Psoas muscle (tissue), 8 donors: ENCODE measurements at regions of chr16 and their contacts with region 1.

Region 1: DNA sequence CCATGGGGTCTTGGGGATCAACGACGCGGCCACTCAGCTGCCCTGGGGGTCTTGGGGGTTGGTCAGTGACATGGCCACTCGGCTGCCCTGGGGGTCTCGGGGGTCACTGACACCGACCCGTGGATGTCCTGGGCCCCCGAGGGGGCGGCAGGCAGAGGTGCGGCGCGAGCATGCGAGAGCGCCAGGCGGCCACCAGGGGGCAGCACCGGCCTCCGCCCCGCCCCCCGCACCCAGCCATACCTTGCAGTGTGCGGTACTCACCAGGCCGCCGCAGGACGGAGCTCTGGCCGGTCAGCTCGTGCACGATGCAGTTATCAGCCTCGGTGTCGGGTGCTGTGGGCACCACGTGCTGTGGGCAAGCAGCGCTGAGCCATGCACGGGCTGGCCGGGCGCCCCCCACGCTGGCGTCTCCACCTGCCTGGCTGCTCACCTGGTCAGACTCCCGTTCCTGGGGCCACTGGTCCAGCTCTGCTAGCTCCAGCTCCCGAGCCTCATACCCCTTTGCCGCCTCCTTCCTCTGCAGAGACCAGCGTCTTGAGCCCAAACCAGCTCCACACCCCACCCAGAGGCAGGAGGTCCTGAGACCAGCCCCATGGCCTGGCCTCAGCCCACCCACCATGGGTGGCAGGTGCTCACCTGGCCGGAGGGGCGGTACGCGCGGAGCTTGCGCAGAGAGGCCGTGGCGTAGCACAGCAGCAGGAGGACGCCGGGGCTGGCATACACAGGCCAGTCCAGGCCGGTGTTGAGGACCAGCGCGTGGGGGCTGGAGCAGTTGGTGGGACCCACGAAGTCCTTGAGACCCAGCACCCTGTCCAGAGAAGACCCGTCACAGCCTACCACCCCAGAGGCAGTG is 31.2 kb downstream of the CTU2 start:
- DNase-seq: peak; percentile 70 to 88
- ATAC-seq: peak; percentile 72 to 91 (median 82)
- H3K4me3 ChIP-seq: no peak overlapping the region
- H3K27ac ChIP-seq: no peak overlapping the region
- H3K4me1 ChIP-seq: no peaks in the 10 kb centered on the region
- H3K27me3 ChIP-seq: peaks cover 0 to under 1% (median 0%) of the 10 kb centered on the region in 3 donors
- CTCF ChIP-seq: peak; percentile 96

Region 2: DNA sequence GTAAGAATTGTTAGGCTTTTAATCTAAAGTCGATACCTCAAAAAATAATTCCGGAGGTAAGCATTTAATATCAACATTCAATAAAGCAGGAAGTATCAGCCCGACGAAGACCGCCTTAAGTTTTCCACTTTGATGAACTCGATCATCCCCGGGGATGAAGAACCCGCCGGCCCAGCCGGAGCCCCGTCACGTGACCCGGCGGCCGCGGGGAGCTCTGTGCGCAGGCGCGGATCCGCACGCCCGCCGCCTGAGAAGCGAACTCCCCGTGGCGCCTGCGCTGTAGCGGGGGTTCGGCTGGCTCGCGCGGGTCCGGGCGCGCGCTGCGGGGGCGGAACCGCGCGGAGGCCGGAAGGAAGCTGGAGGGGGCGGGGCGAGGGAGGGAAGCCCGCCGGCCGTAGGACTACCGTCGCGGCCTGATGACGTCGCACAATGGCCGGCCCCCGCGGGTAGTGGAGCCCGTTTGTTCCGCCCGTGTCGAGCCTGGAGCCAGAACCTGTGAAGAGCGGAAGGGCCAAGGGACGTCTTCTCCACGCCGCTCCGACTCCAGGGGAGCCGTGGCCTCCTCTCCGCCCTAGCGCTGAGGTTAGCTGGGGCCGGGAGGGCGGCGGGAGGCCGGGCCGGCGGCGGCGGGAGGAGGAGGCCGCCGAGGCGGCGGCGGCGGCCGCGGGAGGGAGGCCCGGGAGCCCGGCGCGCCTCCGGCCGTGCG is 167.4 kb before region 1 on chr16 and contains the start of gene ZC3H18:
- intact Hi-C with region 1: no loop called
- DNase-seq: peak; percentile 98 to 99
- ATAC-seq: peak; percentile 99 to 100 (median 99)
- H3K4me3 ChIP-seq: peak within 1 kb of the TSS; percentile 72
- H3K27ac ChIP-seq: peak within 1 kb of the TSS; percentile 85
- H3K4me1 ChIP-seq: peaks cover 17% of the 10 kb centered on the region
- H3K27me3 ChIP-seq: no peaks in the 10 kb centered on the region
- CTCF ChIP-seq: no peak
- total RNA-seq, gene ZC3H18: 24.8 to 30.5 (median 26.9) TPM

Region 3: DNA sequence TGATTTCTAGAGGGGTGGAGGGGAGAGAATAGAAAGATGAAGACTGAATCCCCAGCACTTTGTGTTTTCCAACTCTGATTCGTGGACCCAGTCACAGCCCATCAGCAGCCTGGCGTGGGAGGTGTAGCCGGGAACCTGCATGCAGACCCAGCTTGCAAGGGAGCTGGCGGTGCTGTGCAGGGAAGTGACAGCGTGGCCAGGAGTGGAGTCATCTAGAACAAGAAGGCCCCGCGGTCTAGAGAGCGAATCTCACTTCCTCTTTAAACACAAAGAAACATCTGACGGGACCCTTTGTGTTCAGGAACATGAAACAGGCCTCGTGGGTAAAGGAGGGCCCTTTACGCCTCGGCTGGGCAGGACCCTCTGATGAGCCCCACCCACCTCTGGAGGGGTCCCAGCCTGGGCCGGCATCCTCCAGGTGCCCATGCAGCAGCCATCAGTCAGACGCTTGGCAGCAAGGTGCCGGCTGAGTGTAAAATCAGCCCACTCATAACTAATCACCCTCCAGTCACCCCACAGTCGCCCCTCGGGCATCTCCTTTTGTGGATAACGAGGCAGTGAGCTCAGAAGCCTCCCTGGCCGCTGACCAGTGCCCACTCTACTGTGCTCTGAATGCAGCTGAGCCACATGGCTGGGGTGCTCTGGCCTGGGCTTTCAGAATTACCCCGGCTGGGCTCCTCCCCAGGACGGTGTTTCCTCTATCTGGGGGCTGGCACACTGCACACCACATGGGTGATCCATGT is 55.6 kb before region 1 on chr16:
- intact Hi-C with region 1: no loop called
- DNase-seq: peak in 1 of 2 donors; percentile 65
- ATAC-seq: no peak
- H3K4me3 ChIP-seq: no peak overlapping the region
- H3K27ac ChIP-seq: peak overlapping the region; percentile 27
- H3K4me1 ChIP-seq: peaks cover 35% of the 10 kb centered on the region
- H3K27me3 ChIP-seq: peaks cover 0 to 4% (median 0%) of the 10 kb centered on the region in 3 donors
- CTCF ChIP-seq: no peak

Region 4: GRCh38 chr16:88785106-88785924 is 47.8 kb after region 1 on chr16 and contains the start of gene PIEZO1:
- intact Hi-C with region 1: loop called (anchors 2 to 5 kb)
- DNase-seq: peak; percentile 81 to 83
- ATAC-seq: peak; percentile 55 to 67 (median 57)
- H3K4me3 ChIP-seq: peak within 1 kb of the TSS; percentile 74
- H3K27ac ChIP-seq: peak within 1 kb of the TSS; percentile 61
- H3K4me1 ChIP-seq: peaks cover 7% of the 10 kb centered on the region
- H3K27me3 ChIP-seq: peaks cover 0 to 40% (median 12%) of the 10 kb centered on the region in 3 donors
- CTCF ChIP-seq: peak; percentile 64
- total RNA-seq, gene PIEZO1: 8.8 to 12.6 (median 10.9) TPM

Region 5: DNA sequence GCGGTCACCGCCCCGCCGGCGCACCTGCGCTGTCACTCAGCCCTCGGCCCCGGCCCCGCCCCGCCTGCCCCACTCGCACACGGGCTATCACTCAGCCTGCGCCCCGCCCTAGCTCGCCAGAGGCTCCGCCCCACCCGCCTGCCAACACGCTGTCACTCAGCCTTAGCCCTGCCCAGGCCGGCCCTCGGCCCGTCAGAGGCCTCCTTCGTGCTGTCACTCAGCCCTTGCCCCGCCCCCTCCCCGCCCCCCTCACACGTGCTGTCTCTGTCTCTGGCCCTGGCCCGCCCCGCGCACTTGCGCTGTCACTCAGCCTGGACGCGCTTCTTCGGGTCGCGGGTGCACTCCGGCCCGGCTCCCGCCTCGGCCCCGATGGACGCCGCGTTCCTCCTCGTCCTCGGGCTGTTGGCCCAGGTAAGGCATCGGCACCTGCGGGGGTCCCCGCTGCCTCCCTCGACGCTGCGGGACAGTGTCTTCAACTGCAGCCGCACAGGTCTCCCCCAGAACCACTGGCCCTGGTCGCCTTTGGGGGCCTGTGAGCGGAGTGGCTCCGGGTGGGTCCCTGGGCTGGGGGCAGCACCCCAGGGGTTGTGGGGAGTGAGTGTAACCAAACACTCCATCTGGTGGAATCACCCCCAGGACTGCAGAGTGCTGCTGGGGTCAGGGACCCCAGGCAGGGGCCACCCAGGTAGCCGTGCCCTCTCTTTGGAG is 434.1 kb after region 1 on chr16 and contains the start of gene CDH15:
- intact Hi-C with region 1: loop called (anchors 2 to 5 kb)
- DNase-seq: peak; percentile 94 to 99
- ATAC-seq: peak; percentile 86 to 91 (median 88)
- H3K4me3 ChIP-seq: peak within 1 kb of the TSS; percentile 87
- H3K27ac ChIP-seq: peak within 1 kb of the TSS; percentile 95
- H3K4me1 ChIP-seq: peaks cover 43% of the 10 kb centered on the region
- H3K27me3 ChIP-seq: peaks cover 0 to 16% (median 0%) of the 10 kb centered on the region in 3 donors
- CTCF ChIP-seq: no peak
- total RNA-seq, gene CDH15: 36.7 to 62.8 (median 51.1) TPM

Region 6: GRCh38 chr16:89210904-89211515 is 473.5 kb after region 1 on chr16:
- intact Hi-C with region 1: loop called in 1 of 2 experiments (anchors 5 kb)
- DNase-seq: no peak
- ATAC-seq: no peak
- H3K4me3 ChIP-seq: no peak overlapping the region
- H3K27ac ChIP-seq: no peak overlapping the region
- H3K4me1 ChIP-seq: peaks cover 14% of the 10 kb centered on the region
- H3K27me3 ChIP-seq: peaks cover 0 to 20% (median 2%) of the 10 kb centered on the region in 3 donors
- CTCF ChIP-seq: no peak